Aorta (tissue), 5 donors: ENCODE measurements at regions of chr2 and their contacts with region 1.

Region 1: GRCh38 chr2:45494269-45494977 is 116.6 kb downstream of the SRBD1 start:
- DNase-seq: no peak
- ATAC-seq: no peak
- H3K4me3 ChIP-seq: no peak overlapping the region
- H3K27ac ChIP-seq: no peak overlapping the region
- H3K4me1 ChIP-seq: no peaks in the 10 kb centered on the region
- H3K27me3 ChIP-seq: no peaks in the 10 kb centered on the region

Region 2: GRCh38 chr2:44981136-44982108 is 513.0 kb before region 1 on chr2:
- intact Hi-C with region 1: loop called (anchors 1 kb)
- DNase-seq: peak; percentile 81 to 92
- ATAC-seq: peak; percentile 83
- H3K4me3 ChIP-seq: no peak overlapping the region
- H3K27ac ChIP-seq: no peak overlapping the region
- H3K4me1 ChIP-seq: no peaks in the 10 kb centered on the region
- H3K27me3 ChIP-seq: no peaks in the 10 kb centered on the region

Region 3: DNA sequence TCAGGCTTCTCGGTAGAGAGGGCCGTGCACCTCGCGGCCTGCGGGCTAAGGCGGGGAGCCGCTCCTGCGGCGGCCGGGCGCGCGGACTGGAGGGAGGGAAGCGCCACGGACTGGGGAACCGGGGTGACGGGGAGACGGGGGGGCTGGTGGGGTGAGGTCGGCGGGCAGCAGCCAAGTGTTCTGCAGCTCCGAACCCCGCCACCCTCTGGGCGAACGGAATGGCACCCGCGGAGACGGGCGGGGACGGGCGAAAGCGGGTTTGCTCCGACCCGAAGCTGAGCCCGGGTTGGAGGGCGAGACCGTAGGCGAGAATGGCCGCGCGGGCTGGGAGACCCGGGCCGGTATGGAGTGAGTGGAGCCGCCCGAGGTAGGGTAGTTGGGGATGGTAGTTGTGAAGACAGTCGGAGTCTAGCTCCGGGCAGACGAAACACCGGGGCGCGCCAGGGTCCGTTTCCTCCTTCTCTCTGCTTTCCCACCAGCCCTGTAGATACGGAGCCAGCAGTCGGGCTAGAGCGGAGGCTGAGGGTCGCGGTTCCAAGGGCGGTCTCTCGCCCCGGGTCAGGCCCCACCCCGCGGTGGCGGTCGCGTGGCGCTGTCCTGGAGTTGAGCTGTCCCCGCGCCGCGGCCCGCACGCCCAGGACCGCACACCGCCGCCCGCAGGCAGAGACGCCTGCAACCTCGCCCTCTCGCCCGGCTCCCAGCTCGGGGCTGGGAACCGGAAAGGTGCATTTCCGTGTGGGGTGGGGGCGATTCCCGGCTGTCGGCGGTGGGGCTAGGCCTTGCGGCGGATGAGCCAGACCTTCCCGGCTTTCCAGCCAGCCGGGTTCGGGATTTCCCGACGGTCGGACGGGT is 324.9 kb before region 1 on chr2:
- intact Hi-C with region 1: loop called in 1 of 2 experiments (anchors 10 kb)
- DNase-seq: peak; percentile 58 to 79
- ATAC-seq: peak; percentile 73
- H3K4me3 ChIP-seq: peak overlapping the region; percentile 45 to 53
- H3K27ac ChIP-seq: peak overlapping the region in 1 of 2 donors; percentile 22
- H3K4me1 ChIP-seq: peaks cover 0 to 3% of the 10 kb centered on the region in 2 donors
- H3K27me3 ChIP-seq: no peaks in the 10 kb centered on the region

Region 4: DNA sequence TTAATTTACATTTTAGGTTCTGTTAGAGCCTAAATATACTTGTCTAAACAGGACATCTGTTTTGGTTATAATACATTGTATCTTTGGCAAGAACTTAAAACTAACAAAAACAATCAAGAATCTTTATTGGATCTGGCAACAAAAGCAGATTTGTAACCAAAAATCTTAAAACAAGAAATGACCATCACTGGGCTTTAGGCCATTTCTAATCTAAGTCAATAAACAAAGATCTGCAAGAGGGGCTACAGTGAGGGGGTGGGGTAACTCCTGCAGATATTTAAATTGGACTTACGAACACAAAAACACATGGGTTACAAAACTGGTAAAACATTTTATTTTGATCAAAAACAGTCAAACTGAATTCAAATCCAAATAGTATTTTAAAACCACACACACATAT is 39.3 kb after region 1 on chr2:
- intact Hi-C with region 1: no loop called
- DNase-seq: no peak
- ATAC-seq: no peak
- H3K4me3 ChIP-seq: no peak overlapping the region
- H3K27ac ChIP-seq: no peak overlapping the region
- H3K4me1 ChIP-seq: no peaks in the 10 kb centered on the region
- H3K27me3 ChIP-seq: no peaks in the 10 kb centered on the region